ENCODE measurements at regions of chr1 and their contacts with region 1.

Region 1: GRCh38 chr1:173043253-173043652 is 7.5 kb downstream of the TNFSF18 start:
- DNase-seq: peak; percentile 80
- H3K4me3 ChIP-seq: peak overlapping the region in 1 of 3 experiments; percentile 7
- H3K27ac ChIP-seq: peak overlapping the region; percentile 83
- H3K4me1 ChIP-seq: peaks cover 35% of the 10 kb centered on the region
- H3K27me3 ChIP-seq: no peaks in the 10 kb centered on the region
- CTCF ChIP-seq: no peak
- POLR2A ChIP-seq: no peak

Region 2: GRCh38 chr1:172863031-172863430 is 180.2 kb before region 1 on chr1:
- CTCF ChIA-PET with region 1: no interaction called
- POLR2A ChIA-PET with region 1: no interaction called
- dilution Hi-C with region 1: no loop called
- intact Hi-C with region 1: loop called (anchors 2 kb)
- DNase-seq: no peak
- H3K4me3 ChIP-seq: no peak overlapping the region
- H3K27ac ChIP-seq: no peak overlapping the region
- H3K4me1 ChIP-seq: peaks cover 17% of the 10 kb centered on the region
- H3K27me3 ChIP-seq: no peaks in the 10 kb centered on the region
- CTCF ChIP-seq: no peak
- POLR2A ChIP-seq: no peak

Region 3: DNA sequence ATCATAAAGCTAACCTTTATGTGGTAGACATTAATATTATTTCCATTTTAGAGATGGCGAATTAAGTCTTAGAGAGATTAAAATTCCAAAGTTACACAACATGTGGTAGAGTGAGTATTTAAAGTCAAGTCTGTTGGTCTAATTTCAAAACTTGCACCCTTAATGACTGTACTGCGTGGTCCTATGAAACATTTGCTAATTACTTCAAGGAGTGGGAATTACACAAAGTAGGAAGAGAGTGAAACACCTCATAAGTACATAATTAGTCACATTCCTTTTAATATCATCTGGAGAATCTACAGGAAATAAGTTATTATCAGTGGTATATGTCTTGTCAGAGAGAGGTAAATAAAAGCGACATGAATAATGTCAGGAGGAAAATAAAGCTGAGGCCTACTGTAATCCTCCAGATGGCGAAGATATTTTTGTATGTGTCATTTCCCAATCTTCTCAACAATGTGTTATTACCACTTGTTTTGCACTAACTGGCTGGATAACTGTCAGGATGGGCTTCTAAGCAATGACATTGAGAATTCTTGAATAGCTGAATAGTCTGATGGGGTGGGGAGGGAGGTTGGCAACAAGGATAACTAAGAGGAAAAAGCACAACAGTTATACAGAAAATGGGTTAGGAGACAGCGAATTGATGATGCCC is 88.0 kb before region 1 on chr1:
- CTCF ChIA-PET with region 1: no interaction called
- POLR2A ChIA-PET with region 1: no interaction called
- dilution Hi-C with region 1: no loop called
- intact Hi-C with region 1: loop called (anchors 1 kb)
- DNase-seq: peak; percentile 85
- H3K4me3 ChIP-seq: no peak overlapping the region
- H3K27ac ChIP-seq: peak overlapping the region; percentile 90
- H3K4me1 ChIP-seq: peaks cover 43% of the 10 kb centered on the region
- H3K27me3 ChIP-seq: no peaks in the 10 kb centered on the region
- CTCF ChIP-seq: no peak
- POLR2A ChIP-seq: peak; percentile 33

Region 4: DNA sequence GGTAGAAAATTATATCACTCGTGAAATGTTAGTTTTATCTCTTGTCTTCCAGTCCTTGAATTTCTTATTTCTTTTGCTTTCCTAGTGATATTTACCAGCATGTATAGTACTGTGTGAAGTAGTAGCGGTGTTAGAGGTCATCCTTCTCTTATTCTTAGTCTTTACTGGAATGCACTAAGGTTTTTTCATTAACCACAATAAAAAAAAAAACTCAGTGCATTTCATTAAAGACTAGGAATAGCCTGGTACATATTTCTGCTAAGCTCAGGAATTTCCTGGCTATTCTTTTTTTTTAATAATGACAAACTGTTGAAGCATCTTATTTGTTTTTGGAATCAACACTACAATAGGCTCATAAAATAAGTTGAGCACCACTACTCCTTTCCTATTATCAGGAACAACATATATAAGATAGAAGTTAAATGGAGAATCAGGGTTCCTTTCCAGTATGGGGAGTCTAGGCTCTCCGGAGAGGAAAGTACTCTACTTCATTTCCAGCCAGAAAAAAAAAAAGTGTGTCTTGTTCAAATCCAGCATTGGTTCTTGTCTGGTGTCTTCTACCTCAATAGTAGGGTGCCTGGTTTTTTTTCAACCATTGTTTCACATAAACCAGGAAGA is 52.5 kb before region 1 on chr1:
- CTCF ChIA-PET with region 1: interaction called, 3 read pairs
- POLR2A ChIA-PET with region 1: no interaction called
- dilution Hi-C with region 1: no loop called
- intact Hi-C with region 1: loop called (anchors 5 kb)
- DNase-seq: peak; percentile 61
- H3K4me3 ChIP-seq: no peak overlapping the region
- H3K27ac ChIP-seq: peak overlapping the region; percentile 57
- H3K4me1 ChIP-seq: peaks cover 19% of the 10 kb centered on the region
- H3K27me3 ChIP-seq: no peaks in the 10 kb centered on the region
- CTCF ChIP-seq: no peak
- POLR2A ChIP-seq: no peak

Region 5: GRCh38 chr1:173190101-173190906 is 147.1 kb after region 1 on chr1:
- CTCF ChIA-PET with region 1: no interaction called
- POLR2A ChIA-PET with region 1: no interaction called
- dilution Hi-C with region 1: no loop called
- intact Hi-C with region 1: loop called (anchors 2 kb)
- DNase-seq: peak; percentile 99
- H3K4me3 ChIP-seq: no peak overlapping the region
- H3K27ac ChIP-seq: peak overlapping the region; percentile 98
- H3K4me1 ChIP-seq: peaks cover 58% of the 10 kb centered on the region
- H3K27me3 ChIP-seq: no peaks in the 10 kb centered on the region
- CTCF ChIP-seq: no peak
- POLR2A ChIP-seq: peak; percentile 35

Measured in endothelial cell of umbilical vein (primary cell).